Esophagus muscularis mucosa (tissue), 4 donors: ENCODE measurements at regions of chr11 and their contacts with region 1.

Region 1: GRCh38 chr11:36041988-36042611 is 98.2 kb downstream of the LDLRAD3 start:
- DNase-seq: no peak
- H3K4me3 ChIP-seq: no peak overlapping the region
- H3K27ac ChIP-seq: no peak overlapping the region
- H3K4me1 ChIP-seq: peaks cover 4 to 5% (median 4%) of the 10 kb centered on the region in 4 donors
- H3K27me3 ChIP-seq: no peaks in the 10 kb centered on the region
- CTCF ChIP-seq: peak; percentile 9 to 29 (median 20)
- EP300 ChIP-seq: no peak
- POLR2A ChIP-seq: no peak

Region 2: GRCh38 chr11:36123346-36124101 is 81.4 kb after region 1 on chr11:
- intact Hi-C with region 1: no loop called
- DNase-seq: no peak
- H3K4me3 ChIP-seq: no peak overlapping the region
- H3K27ac ChIP-seq: no peak overlapping the region
- H3K4me1 ChIP-seq: peaks cover 0 to 12% (median 9%) of the 10 kb centered on the region in 4 donors
- H3K27me3 ChIP-seq: no peaks in the 10 kb centered on the region
- CTCF ChIP-seq: no peak
- EP300 ChIP-seq: no peak
- POLR2A ChIP-seq: no peak

Region 3: DNA sequence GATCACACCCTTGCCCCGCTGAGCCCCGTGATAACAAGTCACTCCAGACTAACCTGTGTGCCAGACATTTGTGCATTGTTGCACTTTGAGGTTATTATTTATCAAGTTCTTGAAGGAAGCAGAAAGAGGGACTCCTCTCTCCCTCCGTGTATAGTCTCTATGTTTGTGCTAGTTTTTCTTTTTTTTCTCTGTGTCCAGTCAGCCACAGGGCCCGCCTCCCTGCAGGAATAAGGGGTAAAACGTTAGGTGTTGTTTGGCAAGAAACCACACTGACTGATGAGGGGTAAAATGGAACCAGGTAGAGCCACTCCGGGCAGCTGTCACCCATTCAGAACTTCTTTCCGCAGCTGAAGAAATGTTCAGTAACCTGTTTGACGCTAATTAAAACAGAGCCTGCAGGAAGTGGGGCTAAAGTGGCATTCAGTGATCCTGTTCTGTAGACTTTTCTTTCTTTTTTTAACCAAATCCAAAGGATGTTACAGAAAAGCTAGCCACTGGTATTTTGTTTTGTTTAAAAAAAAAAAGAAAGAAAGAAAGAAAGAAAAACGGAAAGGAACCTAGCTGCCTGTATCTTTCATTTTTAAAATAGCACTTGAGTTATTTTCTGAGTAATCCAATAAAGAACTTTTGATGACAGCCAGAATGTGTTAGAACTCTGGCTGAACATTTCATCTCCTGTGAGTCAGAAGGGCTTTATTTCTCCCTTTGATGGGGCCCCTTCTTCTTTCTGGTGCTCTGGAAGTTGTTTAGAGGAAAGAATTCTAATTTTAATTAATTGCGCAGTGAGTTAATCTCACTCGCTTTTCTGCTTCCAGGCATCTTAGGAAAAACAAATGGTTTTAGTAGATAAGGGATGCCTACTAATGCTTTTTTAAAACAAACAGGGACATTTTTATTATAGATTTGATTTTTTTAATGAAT is 188.9 kb after region 1 on chr11:
- intact Hi-C with region 1: no loop called
- DNase-seq: no peak
- H3K4me3 ChIP-seq: no peak overlapping the region
- H3K27ac ChIP-seq: peak overlapping the region in 3 of 4 donors; percentile 11 to 26 (median 14)
- H3K4me1 ChIP-seq: peaks cover 0 to 21% (median 16%) of the 10 kb centered on the region in 4 donors
- H3K27me3 ChIP-seq: no peaks in the 10 kb centered on the region
- CTCF ChIP-seq: no peak
- EP300 ChIP-seq: no peak
- POLR2A ChIP-seq: no peak

Region 4: GRCh38 chr11:36265793-36266628 is 223.9 kb after region 1 on chr11:
- intact Hi-C with region 1: loop called (anchors 10 kb)
- DNase-seq: no peak
- H3K4me3 ChIP-seq: no peak overlapping the region
- H3K27ac ChIP-seq: no peak overlapping the region
- H3K4me1 ChIP-seq: peaks cover 0 to 3% (median 0%) of the 10 kb centered on the region in 4 donors
- H3K27me3 ChIP-seq: peaks cover 0 to 7% (median 0%) of the 10 kb centered on the region in 4 donors
- CTCF ChIP-seq: peak; percentile 70 to 80 (median 75)
- EP300 ChIP-seq: no peak
- POLR2A ChIP-seq: no peak